ENCODE measurements at regions of chr20 and their contacts with region 1.

Region 1: GRCh38 chr20:24781422-24781980 is 167.6 kb upstream of the CST7 start:
- DNase-seq: peak in 1 of 2 experiments; percentile 32
- H3K4me3 ChIP-seq: no peak overlapping the region
- H3K27ac ChIP-seq: no peak overlapping the region
- H3K4me1 ChIP-seq: no peaks in the 10 kb centered on the region
- H3K27me3 ChIP-seq: no peaks in the 10 kb centered on the region
- CTCF ChIP-seq: peak; percentile 69

Region 2: DNA sequence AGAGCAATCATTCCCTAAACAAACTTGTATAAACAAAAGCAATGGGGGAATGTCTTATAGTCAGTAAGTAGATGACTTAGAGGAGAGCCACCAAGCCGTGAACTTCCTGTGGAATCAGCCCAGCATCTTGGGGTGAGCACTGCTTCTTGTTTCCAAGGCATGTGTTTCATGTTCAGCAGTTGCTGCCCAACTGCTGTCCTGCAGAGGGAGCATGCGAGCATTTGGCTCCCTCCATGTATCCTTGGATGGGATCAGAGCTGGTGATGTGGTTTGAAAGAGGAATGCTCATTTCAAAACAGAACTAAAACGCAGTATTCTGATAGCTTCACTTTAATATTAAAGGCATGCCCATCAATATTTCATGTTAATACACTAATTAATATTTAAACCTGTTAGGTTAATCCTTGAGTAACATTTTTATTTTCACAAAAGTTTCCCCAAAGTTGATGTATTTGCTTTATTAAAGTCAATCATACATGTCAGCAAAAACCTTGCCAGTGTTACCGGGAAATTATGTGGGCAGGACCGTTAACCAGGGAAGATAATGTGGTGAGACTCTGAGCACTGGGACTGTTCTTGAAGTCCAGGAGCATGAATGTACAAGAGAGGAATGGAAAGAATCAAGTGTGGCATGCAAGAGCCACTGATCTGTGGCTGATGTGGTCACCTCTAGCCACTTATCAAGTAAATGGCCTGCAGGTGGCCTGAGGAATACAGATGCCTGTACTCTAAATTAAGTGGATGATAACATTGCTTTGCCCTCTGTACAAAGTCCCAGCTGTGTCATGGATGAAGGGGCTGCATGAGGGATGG is 620.7 kb before region 1 on chr20:
- CTCF ChIA-PET with region 1: no interaction called
- POLR2A ChIA-PET with region 1: no interaction called
- intact Hi-C with region 1: loop called (anchors 10 kb)
- DNase-seq: peak in 1 of 2 experiments; percentile 36
- H3K4me3 ChIP-seq: no peak overlapping the region
- H3K27ac ChIP-seq: no peak overlapping the region
- H3K4me1 ChIP-seq: peaks cover 15% of the 10 kb centered on the region
- H3K27me3 ChIP-seq: no peaks in the 10 kb centered on the region
- CTCF ChIP-seq: peak; percentile 74

Region 3: DNA sequence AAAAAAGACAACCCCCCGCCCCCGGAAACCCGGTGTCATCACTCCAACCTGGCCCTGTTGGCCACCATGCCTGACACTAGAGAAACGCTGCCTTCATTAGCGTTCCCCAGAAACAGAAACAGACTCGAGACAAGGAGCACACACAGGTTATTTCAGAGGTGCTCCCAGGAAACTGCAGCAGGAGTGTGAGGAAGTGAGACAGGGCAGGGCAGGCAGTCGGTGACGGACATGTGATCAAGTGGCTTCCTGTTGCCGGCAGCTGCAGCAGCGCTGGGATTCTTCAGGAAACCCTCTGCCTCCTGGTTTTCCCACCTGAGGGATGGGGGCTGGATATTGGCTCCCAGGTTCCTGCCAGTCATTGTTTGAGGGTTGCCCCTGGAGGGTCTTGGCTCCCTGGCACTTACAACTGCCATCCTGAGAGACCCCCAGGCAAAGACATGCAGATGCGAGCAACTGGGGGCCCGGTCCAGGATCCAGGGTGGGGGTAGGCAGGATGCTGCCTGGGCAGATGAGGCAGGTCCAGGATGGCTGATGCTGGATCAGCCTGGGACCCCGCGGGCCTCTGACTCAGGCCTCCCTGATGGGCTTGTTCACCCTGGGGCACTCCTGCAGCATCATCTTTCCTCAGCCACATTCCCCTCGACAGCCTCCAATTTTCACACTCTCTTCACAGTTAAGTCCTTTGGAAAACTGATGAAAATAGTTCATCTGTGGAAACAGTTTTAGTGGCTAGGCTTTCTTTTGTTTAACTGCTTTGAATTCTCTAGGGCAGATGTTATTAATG is 462.7 kb before region 1 on chr20:
- CTCF ChIA-PET with region 1: no interaction called
- POLR2A ChIA-PET with region 1: no interaction called
- intact Hi-C with region 1: loop called (anchors 10 kb)
- DNase-seq: no peak
- H3K4me3 ChIP-seq: no peak overlapping the region
- H3K27ac ChIP-seq: no peak overlapping the region
- H3K4me1 ChIP-seq: peaks cover 25% of the 10 kb centered on the region
- H3K27me3 ChIP-seq: no peaks in the 10 kb centered on the region
- CTCF ChIP-seq: no peak

Region 4: GRCh38 chr20:24497851-24498250 is 283.6 kb before region 1 on chr20:
- CTCF ChIA-PET with region 1: no interaction called
- POLR2A ChIA-PET with region 1: no interaction called
- intact Hi-C with region 1: loop called (anchors 10 kb)
- DNase-seq: no peak
- H3K4me3 ChIP-seq: no peak overlapping the region
- H3K27ac ChIP-seq: no peak overlapping the region
- H3K4me1 ChIP-seq: no peaks in the 10 kb centered on the region
- H3K27me3 ChIP-seq: no peaks in the 10 kb centered on the region
- CTCF ChIP-seq: no peak

Measured in PC-9 (cell line).